Activated B cell treated with CpG ODN at 0.5 μM for 24 hours (primary cell): ENCODE measurements at regions of chr12 and their contacts with region 1.

Region 1: DNA sequence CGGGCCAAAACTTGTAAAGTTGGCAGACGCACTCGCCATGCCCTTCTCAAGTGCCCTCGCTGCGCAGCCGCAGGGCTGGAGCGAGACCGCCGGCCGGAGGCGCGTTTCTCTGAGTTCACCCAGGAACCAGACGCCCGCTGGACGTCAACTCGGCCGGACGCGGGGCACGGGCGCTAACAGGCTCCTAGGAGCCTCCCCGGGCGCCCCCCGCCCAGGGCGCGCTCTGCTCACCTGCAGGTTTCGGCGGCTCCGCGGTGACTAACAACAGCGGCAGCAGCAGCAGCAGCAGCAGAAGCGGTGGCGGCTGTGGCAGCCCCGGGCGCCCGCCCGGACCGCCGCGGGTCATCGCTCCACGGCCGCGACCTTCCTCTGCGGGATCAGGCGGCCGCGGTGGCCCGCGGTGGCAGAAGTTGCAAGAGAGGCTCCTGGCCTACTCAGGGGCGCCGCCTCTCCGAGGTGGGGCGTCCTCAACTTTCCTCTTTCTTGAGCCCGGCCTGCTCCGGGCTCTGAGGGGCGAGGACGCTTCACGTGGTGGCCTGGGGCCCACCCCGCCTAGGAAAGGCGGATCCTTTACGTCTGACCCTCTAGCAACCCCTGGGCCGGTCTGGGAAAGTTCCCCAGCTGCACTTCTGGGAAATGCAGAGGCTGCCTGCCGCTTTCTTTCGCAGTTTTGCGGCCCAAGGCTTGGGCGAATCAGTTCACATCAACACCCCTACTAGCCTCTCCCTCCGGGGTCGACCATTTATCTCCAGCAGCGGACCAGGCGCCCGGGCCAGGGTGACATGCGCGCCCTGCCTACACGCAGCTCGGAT is at the start of gene PLBD1:
- DNase-seq: peak; percentile 33
- ATAC-seq: peak; percentile 69
- H3K4me3 Mint-ChIP-seq: peak within 1 kb of the TSS; percentile 62
- H3K27ac Mint-ChIP-seq: peak within 1 kb of the TSS; percentile 6
- H3K4me1 Mint-ChIP-seq: peaks cover 8% of the 10 kb centered on the region
- H3K27me3 Mint-ChIP-seq: peaks cover 10% of the 10 kb centered on the region
- CTCF ChIP-seq: no peak
- total RNA-seq, gene PLBD1: 0.33 and 0.56 TPM in 2 replicates

Region 2: GRCh38 chr12:14010989-14011388 is 556.6 kb before region 1 on chr12:
- CTCF ChIA-PET with region 1: no interaction called
- POLR2A ChIA-PET with region 1: no interaction called
- intact Hi-C with region 1: no loop called
- DNase-seq: no peak
- ATAC-seq: no peak
- H3K4me3 Mint-ChIP-seq: no peak overlapping the region
- H3K27ac Mint-ChIP-seq: no peak overlapping the region
- H3K4me1 Mint-ChIP-seq: no peaks in the 10 kb centered on the region
- H3K27me3 Mint-ChIP-seq: peaks cover 29% of the 10 kb centered on the region
- CTCF ChIP-seq: no peak

Region 3: DNA sequence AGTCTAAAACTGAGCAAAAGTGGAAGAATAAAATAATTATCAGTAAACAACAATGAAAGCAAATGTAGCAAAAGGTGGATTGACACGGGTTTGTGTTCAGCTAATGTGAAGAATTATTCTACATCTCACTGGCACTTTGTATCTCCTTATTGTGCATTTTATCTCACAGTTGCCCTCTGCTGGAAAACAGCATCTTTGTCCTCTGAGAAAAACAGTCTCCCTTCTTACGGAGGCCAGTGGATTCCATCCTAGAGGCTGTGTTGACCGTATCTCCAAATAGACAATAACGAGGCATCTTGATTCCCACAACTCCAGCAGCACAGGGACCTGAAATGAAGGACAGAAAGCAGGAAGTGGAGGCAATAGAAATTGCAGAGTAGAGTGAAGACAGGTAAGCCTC is 51.4 kb after region 1 on chr12:
- CTCF ChIA-PET with region 1: interaction called, 10 read pairs
- POLR2A ChIA-PET with region 1: no interaction called
- intact Hi-C with region 1: no loop called
- DNase-seq: no peak
- ATAC-seq: no peak
- H3K4me3 Mint-ChIP-seq: peak overlapping the region; percentile 19
- H3K27ac Mint-ChIP-seq: peak overlapping the region; percentile 9
- H3K4me1 Mint-ChIP-seq: peaks cover 48% of the 10 kb centered on the region
- H3K27me3 Mint-ChIP-seq: no peaks in the 10 kb centered on the region
- CTCF ChIP-seq: no peak

Region 4: DNA sequence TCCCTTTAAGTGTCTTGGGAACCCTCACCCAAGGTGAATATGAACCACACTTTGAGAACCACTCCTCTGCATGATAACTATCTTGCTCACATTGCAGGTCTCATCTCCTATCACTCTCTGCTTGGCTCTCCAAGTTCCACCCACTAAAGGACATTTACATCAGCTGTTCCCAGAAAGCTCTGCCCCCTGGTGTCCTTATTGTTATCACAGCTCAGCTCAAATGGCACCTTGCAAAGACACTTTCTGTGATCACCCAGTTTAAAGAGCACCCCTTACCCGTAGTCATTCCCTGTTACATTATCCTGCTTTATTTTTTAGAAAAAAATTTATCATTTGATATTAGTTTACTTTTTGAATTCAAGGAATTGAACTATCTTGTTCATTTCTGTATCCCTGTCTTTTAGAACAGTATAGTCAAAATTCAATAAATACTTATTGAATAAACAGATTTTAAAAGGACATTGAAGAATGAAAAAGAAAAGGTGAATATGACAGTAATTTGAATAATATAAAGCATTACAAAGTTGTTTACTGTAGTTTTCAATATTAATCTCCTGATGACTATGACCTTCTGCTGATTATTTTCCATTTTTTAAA is 149.4 kb after region 1 on chr12:
- CTCF ChIA-PET with region 1: interaction called, 6 read pairs
- POLR2A ChIA-PET with region 1: no interaction called
- intact Hi-C with region 1: loop called (anchors 1 kb)
- DNase-seq: no peak
- ATAC-seq: peak; percentile 75
- H3K4me3 Mint-ChIP-seq: no peak overlapping the region
- H3K27ac Mint-ChIP-seq: no peak overlapping the region
- H3K4me1 Mint-ChIP-seq: peaks cover 2% of the 10 kb centered on the region
- H3K27me3 Mint-ChIP-seq: peaks cover 8% of the 10 kb centered on the region
- CTCF ChIP-seq: peak; percentile 15